ENCODE measurements at regions of chr19 and their contacts with region 1.

Region 1: DNA sequence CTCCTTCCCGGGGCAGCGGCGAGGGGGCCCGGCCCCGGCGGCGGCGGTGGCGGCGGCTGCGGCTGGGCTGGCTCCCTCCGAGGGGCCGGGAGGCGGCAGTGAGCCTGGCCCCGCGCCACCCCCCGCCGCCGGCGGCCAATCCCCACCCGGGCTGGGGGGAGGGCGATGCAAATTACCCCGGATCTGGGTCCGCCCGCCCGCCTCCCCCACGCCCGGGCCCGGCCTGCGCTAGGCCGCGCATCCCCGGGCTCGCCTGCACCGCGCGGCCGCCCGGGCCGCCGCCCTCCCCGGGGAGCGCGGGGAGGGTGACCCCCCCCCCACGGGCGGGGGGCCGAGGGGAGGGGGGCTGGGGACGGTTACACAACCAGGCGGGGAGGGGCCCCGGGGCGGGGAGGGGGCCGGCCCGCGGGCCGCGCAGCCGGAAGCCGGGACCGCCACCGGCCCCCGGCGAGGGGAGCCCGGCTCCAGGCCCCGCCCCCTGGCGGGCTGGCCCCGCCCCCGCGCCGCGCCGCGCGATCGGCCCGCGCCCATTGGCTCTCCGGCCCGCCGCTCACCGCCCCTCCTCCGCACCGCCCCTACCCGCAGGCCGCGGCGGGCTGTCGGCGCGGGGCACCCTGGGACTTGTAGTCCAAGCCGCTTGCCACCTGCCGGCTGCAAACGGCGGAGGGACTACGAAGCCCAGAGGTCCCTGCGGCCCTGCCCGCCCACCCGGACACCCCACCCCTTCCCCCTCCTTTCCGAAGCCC is 1.1 kb downstream of the ZBTB7A start:
- DNase-seq: peak; percentile 96 to 97
- H3K4me3 ChIP-seq: peak overlapping the region; percentile 91
- H3K4me3 Mint-ChIP-seq: peak overlapping the region; percentile 76
- H3K27ac Mint-ChIP-seq: no peak overlapping the region
- H3K4me1 ChIP-seq: peaks cover 36% of the 10 kb centered on the region
- H3K4me1 Mint-ChIP-seq: no peaks in the 10 kb centered on the region
- H3K27me3 ChIP-seq: no peaks in the 10 kb centered on the region
- H3K27me3 Mint-ChIP-seq: no peaks in the 10 kb centered on the region
- CTCF ChIP-seq: no peak

Region 2: DNA sequence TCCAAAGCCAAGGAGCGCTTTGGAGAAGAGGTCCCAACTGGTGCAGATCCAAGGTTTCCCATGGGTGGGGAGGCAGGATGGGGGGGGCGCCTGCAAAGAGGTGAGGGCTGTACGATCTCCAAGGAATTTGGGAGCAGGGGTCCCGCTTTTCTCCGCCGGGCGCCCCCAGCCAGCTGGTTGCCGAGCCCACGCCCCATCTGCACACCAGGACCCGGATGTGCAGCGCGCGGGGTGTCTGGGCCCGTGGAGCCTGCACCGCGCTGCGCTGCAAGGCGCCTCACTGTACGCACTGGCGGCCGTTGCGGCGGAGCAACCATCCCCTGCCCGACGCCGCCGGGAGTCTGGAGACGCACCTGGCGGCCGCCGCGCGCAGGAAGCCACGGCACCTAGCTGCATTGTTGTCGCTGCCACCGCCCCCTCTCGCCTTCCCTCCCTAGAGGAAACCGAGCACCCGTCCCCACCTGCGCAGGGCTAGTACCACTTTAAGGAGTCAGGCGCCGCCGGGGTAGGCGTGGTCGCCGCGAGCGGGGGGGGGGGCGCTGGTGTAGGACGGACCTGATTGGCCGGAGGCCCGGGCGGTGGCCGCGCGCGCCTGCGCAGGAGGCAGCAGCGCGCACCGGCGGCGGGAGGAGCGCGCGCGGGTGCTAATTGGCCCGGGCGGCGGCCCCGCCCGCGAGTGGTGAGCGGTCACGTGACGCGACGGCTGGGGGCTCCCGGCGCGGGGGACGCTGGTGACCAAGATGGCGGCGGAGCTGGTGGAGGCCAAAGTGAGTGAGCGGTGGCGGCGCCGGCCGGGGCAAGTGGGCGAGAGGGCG is 58.4 kb before region 1 on chr19 and contains the start of gene PIAS4:
- CTCF ChIA-PET with region 1: interaction called, 3 read pairs
- POLR2A ChIA-PET with region 1: no interaction called
- intact Hi-C with region 1: loop called (anchors 5 kb)
- DNase-seq: peak; percentile 94 to 96
- H3K4me3 ChIP-seq: peak within 1 kb of the TSS; percentile 92
- H3K4me3 Mint-ChIP-seq: peak within 1 kb of the TSS; percentile 86
- H3K27ac Mint-ChIP-seq: peak within 1 kb of the TSS; percentile 78
- H3K4me1 ChIP-seq: peaks cover 4% of the 10 kb centered on the region; the same call in 1 of the 2 replicates
- H3K4me1 Mint-ChIP-seq: peaks cover 5% of the 10 kb centered on the region
- H3K27me3 ChIP-seq: no peaks in the 10 kb centered on the region
- H3K27me3 Mint-ChIP-seq: no peaks in the 10 kb centered on the region
- CTCF ChIP-seq: no peak
- total RNA-seq, gene PIAS4: 43.3 and 45.7 TPM in 2 replicates

Region 3: DNA sequence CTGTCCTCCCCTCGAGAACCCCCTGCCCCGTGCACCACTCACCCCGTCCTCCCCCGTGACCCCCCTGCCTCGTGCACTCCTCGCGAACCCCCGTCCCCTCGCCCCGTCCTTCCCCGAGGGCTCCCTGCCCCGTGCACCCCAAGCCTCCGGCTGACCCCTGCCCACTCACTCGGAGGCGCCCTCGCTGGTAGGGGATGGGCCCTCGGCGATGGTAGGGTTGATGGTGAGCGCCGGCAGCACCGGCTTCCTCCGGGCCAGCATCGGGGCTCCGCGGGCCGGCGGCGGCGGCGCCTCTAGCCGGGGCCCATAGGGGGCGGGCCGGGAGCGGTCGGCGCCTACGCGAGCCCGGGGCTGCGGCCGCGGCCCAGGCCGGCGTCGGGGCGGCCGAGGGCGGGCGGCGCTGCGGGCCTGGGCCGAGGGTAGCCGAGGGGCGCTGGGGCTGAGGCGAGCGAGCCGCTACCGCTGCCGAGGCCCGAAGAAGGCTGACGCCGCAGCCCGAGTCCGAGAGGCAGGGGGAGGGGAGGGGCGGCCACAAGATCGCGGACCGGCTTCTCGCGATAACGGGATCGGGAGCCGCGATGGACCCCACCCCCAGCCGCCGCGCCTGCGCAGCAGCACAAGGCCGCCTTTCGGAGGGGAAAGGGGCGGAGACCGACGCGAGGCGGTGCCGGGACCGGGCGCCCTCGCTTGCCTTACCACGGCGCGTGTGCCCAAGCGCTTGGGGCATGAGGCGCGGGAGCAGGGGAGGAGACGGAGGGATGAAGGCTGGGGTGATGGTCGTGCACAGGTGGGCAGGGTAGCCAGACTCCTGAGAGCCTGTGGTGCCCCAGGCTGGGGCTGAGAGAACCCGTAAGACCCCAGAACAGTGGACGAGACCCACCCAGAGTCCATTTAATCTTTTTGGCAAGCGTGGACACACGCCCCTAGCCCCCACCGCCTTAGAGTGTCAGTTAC is 58.3 kb after region 1 on chr19 and contains the start of gene MAP2K2:
- CTCF ChIA-PET with region 1: no interaction called
- POLR2A ChIA-PET with region 1: no interaction called
- intact Hi-C with region 1: loop called (anchors 5 kb)
- DNase-seq: peak; percentile 91 to 96
- H3K4me3 ChIP-seq: peak within 1 kb of the TSS; percentile 98
- H3K4me3 Mint-ChIP-seq: peak within 1 kb of the TSS; percentile 100
- H3K27ac Mint-ChIP-seq: peak within 1 kb of the TSS; percentile 95
- H3K4me1 ChIP-seq: no peaks in the 10 kb centered on the region
- H3K4me1 Mint-ChIP-seq: peaks cover 24% of the 10 kb centered on the region
- H3K27me3 ChIP-seq: no peaks in the 10 kb centered on the region
- H3K27me3 Mint-ChIP-seq: no peaks in the 10 kb centered on the region
- CTCF ChIP-seq: no peak
- total RNA-seq, gene MAP2K2: 149 and 163 TPM in 2 replicates